Esophagus muscularis mucosa (tissue), 4 donors: ENCODE measurements at regions of chr1 and their contacts with region 1.

Region 1: GRCh38 chr1:24027838-24028468 is 47.8 kb upstream of the SRSF10 start:
- DNase-seq: no peak
- H3K4me3 ChIP-seq: no peak overlapping the region
- H3K27ac ChIP-seq: no peak overlapping the region
- H3K4me1 ChIP-seq: peaks cover 0 to 13% (median 11%) of the 10 kb centered on the region in 4 donors
- H3K27me3 ChIP-seq: no peaks in the 10 kb centered on the region
- CTCF ChIP-seq: peak; percentile 67 to 69 (median 67)
- EP300 ChIP-seq: no peak
- POLR2A ChIP-seq: no peak

Region 2: GRCh38 chr1:23959041-23959460 is 68.9 kb before region 1 on chr1:
- intact Hi-C with region 1: loop called (anchors 2 kb)
- DNase-seq: peak; percentile 96
- H3K4me3 ChIP-seq: peak overlapping the region; percentile 70 to 97 (median 80)
- H3K27ac ChIP-seq: peak overlapping the region; percentile 97 to 100 (median 100)
- H3K4me1 ChIP-seq: peaks cover 37 to 63% (median 47%) of the 10 kb centered on the region in 4 donors
- H3K27me3 ChIP-seq: no peaks in the 10 kb centered on the region
- CTCF ChIP-seq: peak; percentile 32 to 68 (median 47)
- EP300 ChIP-seq: no peak
- POLR2A ChIP-seq: no peak